WTC11 (cell line): ENCODE measurements at regions of chr11 and their contacts with region 1.

Region 1: GRCh38 chr11:134261626-134262488 is 8.5 kb downstream of the ACAD8 start:
- DNase-seq: peak; percentile 58
- ATAC-seq: peak; percentile 90
- H3K4me3 Mint-ChIP-seq: no peak overlapping the region
- H3K27ac Mint-ChIP-seq: no peak overlapping the region
- H3K4me1 Mint-ChIP-seq: peaks cover 22% of the 10 kb centered on the region
- H3K27me3 Mint-ChIP-seq: no peaks in the 10 kb centered on the region
- CTCF ChIP-seq: peak; percentile 33; the same call in 1 of the 2 replicates

Region 2: DNA sequence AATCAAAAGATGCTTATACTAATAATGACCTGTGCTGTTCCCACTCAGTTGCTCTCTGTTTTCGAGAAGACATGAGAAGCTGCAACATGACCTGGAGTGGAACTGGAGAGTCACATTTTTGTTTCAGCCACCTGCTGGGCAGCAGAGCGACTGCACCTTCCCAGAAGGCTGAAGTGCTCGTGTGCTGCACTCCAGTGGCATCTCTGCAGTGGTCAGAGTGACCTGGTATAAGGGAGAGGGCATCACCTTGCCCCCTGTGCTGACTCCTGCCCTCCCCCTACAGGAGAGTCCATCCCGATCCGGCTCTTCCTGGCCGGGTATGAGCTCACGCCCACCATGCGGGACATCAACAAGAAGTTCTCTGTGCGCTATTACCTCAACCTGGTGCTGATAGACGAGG is 17.2 kb before region 1 on chr11:
- CTCF ChIA-PET with region 1: interaction called, 12 read pairs
- POLR2A ChIA-PET with region 1: no interaction called
- DNase-seq: no peak
- ATAC-seq: peak; percentile 83
- H3K4me3 Mint-ChIP-seq: no peak overlapping the region
- H3K27ac Mint-ChIP-seq: no peak overlapping the region
- H3K4me1 Mint-ChIP-seq: peaks cover 8% of the 10 kb centered on the region
- H3K27me3 Mint-ChIP-seq: no peaks in the 10 kb centered on the region
- CTCF ChIP-seq: no peak

Region 3: GRCh38 chr11:134275534-134276395 is 13.9 kb after region 1 on chr11 and contains the start of gene GLB1L3:
- CTCF ChIA-PET with region 1: interaction called, 57 read pairs
- POLR2A ChIA-PET with region 1: interaction called, 7 read pairs
- DNase-seq: peak; percentile 71
- ATAC-seq: peak; percentile 20
- H3K4me3 Mint-ChIP-seq: peak within 1 kb of the TSS; percentile 98
- H3K27ac Mint-ChIP-seq: peak within 1 kb of the TSS; percentile 94
- H3K4me1 Mint-ChIP-seq: peaks cover 64% of the 10 kb centered on the region
- H3K27me3 Mint-ChIP-seq: no peaks in the 10 kb centered on the region
- CTCF ChIP-seq: no peak
- total RNA-seq, gene GLB1L3: 34.6 to 50.2 TPM (median 35.9 TPM) in 3 replicates

Region 4: DNA sequence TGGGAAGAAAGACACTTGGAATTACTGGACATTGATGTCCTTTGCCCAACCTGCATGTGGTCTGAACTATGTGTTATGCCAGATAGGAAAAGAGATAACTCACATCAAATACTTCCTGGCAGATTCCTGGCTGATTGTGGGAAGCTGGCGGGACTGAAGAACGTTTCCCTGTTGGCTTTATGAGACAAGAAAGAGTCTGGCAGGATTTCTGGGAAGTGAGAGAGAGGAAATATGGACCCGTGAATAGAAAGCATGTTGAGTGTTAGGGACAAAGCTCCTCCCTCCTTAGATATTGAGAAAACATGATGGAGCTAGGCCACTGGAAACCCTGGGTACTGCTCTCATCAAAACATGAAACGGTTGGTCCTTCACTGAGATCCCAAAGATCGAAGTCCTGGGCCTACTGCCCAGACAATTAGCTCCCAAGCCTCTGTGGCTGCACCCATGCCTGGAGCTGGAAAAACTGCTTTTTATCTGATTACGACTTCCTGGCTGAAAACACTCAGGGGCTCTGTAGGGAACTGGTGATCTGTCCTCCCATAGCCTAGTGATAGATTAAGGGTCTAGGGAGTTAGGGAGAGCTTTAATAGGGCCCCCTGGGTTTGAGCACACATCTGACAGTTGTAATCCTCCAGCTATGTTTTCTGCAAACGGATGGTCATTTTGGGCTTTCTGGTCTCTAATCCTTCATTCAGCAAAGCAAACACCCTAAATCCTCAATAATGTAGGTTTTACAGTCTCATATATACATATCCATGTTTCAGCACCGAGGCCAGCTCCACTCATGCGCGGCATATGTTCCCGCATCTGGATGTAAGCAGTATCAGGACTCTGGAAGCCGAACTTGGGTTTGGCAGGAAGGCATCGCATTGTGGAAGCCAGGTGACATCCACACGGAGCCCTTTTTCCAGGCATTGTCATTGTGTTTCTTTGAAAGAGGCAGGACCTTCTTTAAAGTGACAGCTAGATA is 156.3 kb after region 1 on chr11:
- CTCF ChIA-PET with region 1: no interaction called
- POLR2A ChIA-PET with region 1: no interaction called
- DNase-seq: peak; percentile 13
- ATAC-seq: no peak
- H3K4me3 Mint-ChIP-seq: no peak overlapping the region
- H3K27ac Mint-ChIP-seq: no peak overlapping the region
- H3K4me1 Mint-ChIP-seq: peaks cover 34% of the 10 kb centered on the region
- H3K27me3 Mint-ChIP-seq: peaks cover 29% of the 10 kb centered on the region
- CTCF ChIP-seq: no peak

Region 5: DNA sequence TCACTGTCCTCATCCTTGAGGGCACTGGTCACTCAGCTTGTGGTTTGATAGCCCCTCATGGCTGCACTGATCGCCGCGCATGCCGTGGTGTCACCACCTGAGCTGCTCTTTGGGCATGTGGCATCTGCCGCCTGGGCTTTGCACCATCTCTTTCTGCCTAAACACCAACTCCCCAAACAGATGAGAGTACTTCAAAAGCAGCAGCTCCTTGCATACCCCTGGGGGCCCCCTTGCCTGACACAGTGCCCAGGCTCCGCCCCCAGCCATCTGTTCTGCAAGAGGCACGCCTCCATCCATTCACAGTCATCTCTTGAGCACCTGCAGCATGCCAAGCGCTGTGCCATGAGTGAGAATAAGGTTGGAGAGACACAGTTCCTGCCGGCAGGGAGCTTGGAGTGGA is 254.7 kb after region 1 on chr11:
- CTCF ChIA-PET with region 1: no interaction called
- POLR2A ChIA-PET with region 1: no interaction called
- DNase-seq: peak; percentile 35
- ATAC-seq: peak; percentile 70
- H3K4me3 Mint-ChIP-seq: no peak overlapping the region
- H3K27ac Mint-ChIP-seq: no peak overlapping the region
- H3K4me1 Mint-ChIP-seq: peaks cover 16% of the 10 kb centered on the region
- H3K27me3 Mint-ChIP-seq: no peaks in the 10 kb centered on the region
- CTCF ChIP-seq: no peak